Prostate gland (tissue), 2 donors: ENCODE measurements at regions of chr21 and their contacts with region 1.

Region 1: GRCh38 chr21:14318578-14318977 is 64.4 kb downstream of the HSPA13 start:
- DNase-seq: no peak
- H3K4me3 ChIP-seq: no peak overlapping the region
- H3K27ac ChIP-seq: no peak overlapping the region
- H3K4me1 ChIP-seq: no peaks in the 10 kb centered on the region
- H3K27me3 ChIP-seq: no peaks in the 10 kb centered on the region
- CTCF ChIP-seq: no peak
- POLR2A ChIP-seq: no peak

Region 2: GRCh38 chr21:14306151-14306907 is 12.2 kb before region 1 on chr21:
- intact Hi-C with region 1: loop called (anchors 2 kb)
- DNase-seq: no peak
- H3K4me3 ChIP-seq: no peak overlapping the region
- H3K27ac ChIP-seq: no peak overlapping the region
- H3K4me1 ChIP-seq: no peaks in the 10 kb centered on the region
- H3K27me3 ChIP-seq: no peaks in the 10 kb centered on the region
- CTCF ChIP-seq: peak in 2 of 4 experiments; percentile 30
- POLR2A ChIP-seq: no peak